Naive thymus-derived CD4-positive, alpha-beta T cell (primary cell): ENCODE measurements at regions of chrX and their contacts with region 1.

Region 1: GRCh38 chrX:45134315-45134731 is 66.4 kb downstream of the DIPK2B start:
- DNase-seq: no peak
- ATAC-seq: no peak
- H3K4me3 ChIP-seq: no peak overlapping the region
- H3K4me3 Mint-ChIP-seq: no peak overlapping the region
- H3K27ac ChIP-seq: no peak overlapping the region
- H3K27ac Mint-ChIP-seq: peak overlapping the region in 1 of 9 donors; percentile 62
- H3K4me1 ChIP-seq: no peaks in the 10 kb centered on the region
- H3K4me1 Mint-ChIP-seq: no peaks in the 10 kb centered on the region
- H3K27me3 ChIP-seq: no peaks in the 10 kb centered on the region
- H3K27me3 Mint-ChIP-seq: no peaks in the 10 kb centered on the region

Region 2: DNA sequence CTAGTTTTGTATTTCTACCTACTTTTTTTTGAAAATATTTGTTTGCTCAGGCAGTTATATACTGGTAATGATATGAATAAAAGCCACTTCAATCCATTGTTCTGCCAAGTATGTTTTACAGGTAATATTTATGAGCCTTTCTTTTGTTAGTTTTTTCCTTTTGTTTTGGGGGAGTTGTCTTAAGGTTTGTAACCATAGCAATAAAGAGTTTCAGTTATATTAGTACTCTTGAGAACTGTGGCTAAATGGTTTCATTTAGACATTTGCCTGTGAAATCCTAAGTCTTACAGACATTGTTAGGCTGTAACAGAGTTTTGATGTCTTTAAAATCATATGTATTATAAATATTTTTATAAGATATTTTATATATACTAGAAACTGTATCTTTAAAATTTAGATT is 83.8 kb before region 1 on chrX:
- CTCF ChIA-PET with region 1: no interaction called
- POLR2A ChIA-PET with region 1: no interaction called
- intact Hi-C with region 1: no loop called
- DNase-seq: no peak
- ATAC-seq: no peak
- H3K4me3 ChIP-seq: no peak overlapping the region
- H3K4me3 Mint-ChIP-seq: no peak overlapping the region
- H3K27ac ChIP-seq: no peak overlapping the region
- H3K27ac Mint-ChIP-seq: peak overlapping the region in 2 of 9 donors; percentile 3 to 52
- H3K4me1 ChIP-seq: no peaks in the 10 kb centered on the region
- H3K4me1 Mint-ChIP-seq: peaks cover 0 to 42% (median 19%) of the 10 kb centered on the region in 7 donors
- H3K27me3 ChIP-seq: no peaks in the 10 kb centered on the region
- H3K27me3 Mint-ChIP-seq: no peaks in the 10 kb centered on the region

Region 3: GRCh38 chrX:45077748-45078424 is 56.4 kb before region 1 on chrX:
- CTCF ChIA-PET with region 1: no interaction called
- POLR2A ChIA-PET with region 1: no interaction called
- intact Hi-C with region 1: loop called in 1 of 2 experiments (anchors 5 kb)
- DNase-seq: no peak
- ATAC-seq: no peak
- H3K4me3 ChIP-seq: no peak overlapping the region
- H3K4me3 Mint-ChIP-seq: peak overlapping the region in 5 of 10 donors; percentile 1 to 83 (median 24)
- H3K27ac ChIP-seq: no peak overlapping the region
- H3K27ac Mint-ChIP-seq: peak overlapping the region in 5 of 9 donors; percentile 19 to 92 (median 54)
- H3K4me1 ChIP-seq: no peaks in the 10 kb centered on the region
- H3K4me1 Mint-ChIP-seq: peaks cover 18 to 55% (median 40%) of the 10 kb centered on the region in 7 donors
- H3K27me3 ChIP-seq: no peaks in the 10 kb centered on the region
- H3K27me3 Mint-ChIP-seq: no peaks in the 10 kb centered on the region

Region 4: DNA sequence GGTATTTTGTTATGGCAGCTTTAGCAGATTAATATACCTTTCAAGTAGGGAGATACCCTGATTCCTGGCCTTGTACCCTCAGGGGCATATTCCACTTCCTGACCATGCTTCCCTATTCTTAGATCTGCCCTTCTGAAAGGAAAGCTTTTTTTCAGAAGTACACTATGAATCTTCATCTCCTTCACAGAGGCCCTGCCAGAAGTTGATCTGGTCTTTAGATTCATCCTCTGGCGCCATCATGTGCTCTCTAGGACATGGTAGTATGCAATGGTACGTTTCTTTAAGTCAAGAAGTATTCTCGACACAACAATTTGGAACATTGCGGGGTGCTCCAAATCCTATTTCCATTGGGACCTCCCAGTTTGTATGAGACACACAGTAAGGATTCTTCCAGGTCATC is 106.0 kb after region 1 on chrX:
- CTCF ChIA-PET with region 1: no interaction called
- POLR2A ChIA-PET with region 1: no interaction called
- intact Hi-C with region 1: no loop called
- DNase-seq: peak in 1 of 9 donors; percentile 9
- ATAC-seq: no peak
- H3K4me3 ChIP-seq: no peak overlapping the region
- H3K4me3 Mint-ChIP-seq: no peak overlapping the region
- H3K27ac ChIP-seq: no peak overlapping the region
- H3K27ac Mint-ChIP-seq: no peak overlapping the region
- H3K4me1 ChIP-seq: no peaks in the 10 kb centered on the region
- H3K4me1 Mint-ChIP-seq: no peaks in the 10 kb centered on the region
- H3K27me3 ChIP-seq: no peaks in the 10 kb centered on the region
- H3K27me3 Mint-ChIP-seq: no peaks in the 10 kb centered on the region

Region 5: DNA sequence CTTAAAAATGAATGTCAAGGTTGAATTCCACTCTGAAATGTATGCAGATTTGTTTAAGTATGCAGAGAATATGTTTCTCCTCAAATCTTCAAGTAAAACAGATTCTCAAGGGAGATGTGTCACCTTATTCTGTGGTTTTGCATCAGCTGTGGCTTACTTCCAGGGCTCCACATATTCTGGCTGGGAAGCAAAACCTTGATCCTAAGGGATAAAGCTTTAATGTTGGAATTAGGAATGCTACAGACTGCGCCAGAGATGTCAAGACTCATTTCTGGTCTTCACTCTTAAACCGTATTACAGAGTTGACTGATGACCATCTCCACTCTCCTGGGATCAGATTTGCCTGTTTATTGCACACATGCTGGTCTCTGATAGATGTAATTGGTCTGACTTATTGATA is 210.3 kb after region 1 on chrX:
- CTCF ChIA-PET with region 1: no interaction called
- POLR2A ChIA-PET with region 1: no interaction called
- intact Hi-C with region 1: loop called in 1 of 2 experiments (anchors 10 kb)
- DNase-seq: no peak
- ATAC-seq: no peak
- H3K4me3 ChIP-seq: no peak overlapping the region
- H3K4me3 Mint-ChIP-seq: no peak overlapping the region
- H3K27ac ChIP-seq: no peak overlapping the region
- H3K27ac Mint-ChIP-seq: no peak overlapping the region
- H3K4me1 ChIP-seq: no peaks in the 10 kb centered on the region
- H3K4me1 Mint-ChIP-seq: no peaks in the 10 kb centered on the region
- H3K27me3 ChIP-seq: no peaks in the 10 kb centered on the region
- H3K27me3 Mint-ChIP-seq: no peaks in the 10 kb centered on the region